Naive thymus-derived CD4-positive, alpha-beta T cell (primary cell): ENCODE measurements at regions of chr3 and their contacts with region 1.

Region 1: DNA sequence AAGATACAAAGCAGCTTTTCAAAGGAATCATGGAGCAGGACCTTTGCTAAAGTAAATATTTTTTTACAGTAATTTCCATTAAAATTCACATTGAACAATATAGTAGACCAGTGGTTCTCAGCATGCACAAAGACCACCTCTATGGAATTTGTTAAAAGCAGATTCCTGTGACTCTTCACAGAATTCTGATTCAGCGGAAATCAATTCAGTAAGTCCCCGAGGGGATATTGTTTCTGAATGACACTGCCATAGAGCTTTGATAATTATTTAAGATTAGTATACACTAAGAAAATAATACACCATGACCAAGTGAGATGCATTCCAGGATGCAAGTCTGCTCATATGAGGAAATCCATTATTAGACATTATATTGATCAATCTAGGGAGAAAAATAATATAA is 161.9 kb upstream of the TNIK start:
- DNase-seq: no peak
- ATAC-seq: no peak
- H3K4me3 ChIP-seq: no peak overlapping the region
- H3K4me3 Mint-ChIP-seq: no peak overlapping the region
- H3K27ac ChIP-seq: no peak overlapping the region
- H3K27ac Mint-ChIP-seq: no peak overlapping the region
- H3K4me1 ChIP-seq: no peaks in the 10 kb centered on the region
- H3K4me1 Mint-ChIP-seq: peaks cover 0 to 4% (median 0%) of the 10 kb centered on the region in 7 donors
- H3K27me3 ChIP-seq: no peaks in the 10 kb centered on the region
- H3K27me3 Mint-ChIP-seq: peaks cover 3 to 22% (median 11%) of the 10 kb centered on the region in 5 donors

Region 2: GRCh38 chr3:171658841-171659240 is 36.7 kb after region 1 on chr3:
- CTCF ChIA-PET with region 1: no interaction called
- POLR2A ChIA-PET with region 1: no interaction called
- intact Hi-C with region 1: loop called in 1 of 2 experiments (anchors 1 kb)
- DNase-seq: no peak
- ATAC-seq: no peak
- H3K4me3 ChIP-seq: no peak overlapping the region
- H3K4me3 Mint-ChIP-seq: no peak overlapping the region
- H3K27ac ChIP-seq: no peak overlapping the region
- H3K27ac Mint-ChIP-seq: no peak overlapping the region
- H3K4me1 ChIP-seq: no peaks in the 10 kb centered on the region
- H3K4me1 Mint-ChIP-seq: no peaks in the 10 kb centered on the region
- H3K27me3 ChIP-seq: no peaks in the 10 kb centered on the region
- H3K27me3 Mint-ChIP-seq: peaks cover 4 to 33% (median 7%) of the 10 kb centered on the region in 5 donors